ENCODE measurements at regions of chr10 and their contacts with region 1.

Region 1: GRCh38 chr10:52064084-52064845 is 249.8 kb upstream of the DKK1 start:
- DNase-seq: no peak
- ATAC-seq: peak; percentile 26

Region 2: GRCh38 chr10:53537508-53537907 is 1473.2 kb after region 1 on chr10:
- intact Hi-C with region 1: loop called (anchors 5 kb)
- DNase-seq: no peak
- ATAC-seq: no peak